Natural killer cell (primary cell): ENCODE measurements at regions of chr18 and their contacts with region 1.

Region 1: GRCh38 chr18:59885579-59886163 is 14.1 kb upstream of the PMAIP1 start:
- DNase-seq: peak in 1 of 2 donors; percentile 56
- ATAC-seq: peak; percentile 74 to 83 (median 80)
- H3K4me3 ChIP-seq: no peak overlapping the region
- H3K4me3 Mint-ChIP-seq: peak overlapping the region; percentile 86
- H3K27ac ChIP-seq: peak overlapping the region; percentile 71
- H3K27ac Mint-ChIP-seq: peak overlapping the region; percentile 85 to 89
- H3K4me1 ChIP-seq: peaks cover 38% of the 10 kb centered on the region
- H3K4me1 Mint-ChIP-seq: peaks cover 42 to 43% of the 10 kb centered on the region in 2 donors
- H3K27me3 ChIP-seq: no peaks in the 10 kb centered on the region
- H3K27me3 Mint-ChIP-seq: no peaks in the 10 kb centered on the region
- CTCF ChIP-seq: no peak

Region 2: DNA sequence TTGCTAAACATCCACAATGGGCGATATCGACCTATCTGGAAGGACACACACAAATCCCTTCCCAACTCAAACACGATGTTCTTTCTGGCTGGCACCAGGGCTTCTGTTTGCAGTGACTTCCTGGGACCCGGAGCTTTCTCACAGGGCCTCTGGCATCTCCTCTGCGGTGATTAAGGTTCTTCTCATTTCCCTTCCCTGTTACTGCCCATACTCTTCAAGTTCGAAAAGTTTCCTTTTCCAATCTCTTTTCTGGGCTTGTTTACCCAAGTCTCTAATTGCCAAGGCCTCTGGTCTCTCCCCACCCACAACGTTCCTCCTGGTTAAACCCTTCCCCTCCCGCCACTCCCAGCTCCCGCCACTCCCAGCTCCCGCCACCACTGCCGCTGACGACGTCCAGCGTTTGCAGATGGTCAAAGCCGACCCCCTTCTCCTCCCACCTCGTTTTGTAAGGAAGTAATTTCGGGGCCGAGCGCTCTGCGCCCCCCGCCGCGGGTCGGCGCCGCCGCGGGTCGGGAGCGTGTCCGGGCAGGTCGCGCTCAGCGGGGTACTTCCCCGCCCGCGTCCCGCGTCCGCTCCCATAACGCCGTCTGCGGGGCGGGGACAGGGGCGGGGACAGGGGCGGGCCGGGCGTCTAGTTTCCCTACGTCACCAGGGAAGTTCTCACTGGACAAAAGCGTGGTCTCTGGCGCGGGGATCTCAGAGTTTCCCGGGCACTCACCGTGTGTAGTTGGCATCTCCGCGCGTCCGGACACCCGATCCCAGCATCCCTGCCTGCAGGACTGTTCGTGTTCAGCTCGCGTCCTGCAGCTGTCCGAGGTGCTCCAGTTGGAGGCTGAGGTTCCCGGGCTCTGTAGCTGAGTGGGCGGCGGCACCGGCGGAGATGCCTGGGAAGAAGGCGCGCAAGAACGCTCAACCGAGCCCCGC is 13.9 kb after region 1 on chr18 and contains the start of gene PMAIP1:
- intact Hi-C with region 1: loop called (anchors 2 kb)
- DNase-seq: peak; percentile 91
- ATAC-seq: peak; percentile 71 to 91 (median 84)
- H3K4me3 ChIP-seq: peak within 1 kb of the TSS; percentile 97
- H3K4me3 Mint-ChIP-seq: peak within 1 kb of the TSS; percentile 97
- H3K27ac ChIP-seq: peak within 1 kb of the TSS; percentile 95
- H3K27ac Mint-ChIP-seq: peak within 1 kb of the TSS; percentile 90 to 98
- H3K4me1 ChIP-seq: peaks cover 14% of the 10 kb centered on the region
- H3K4me1 Mint-ChIP-seq: peaks cover 46 to 49% of the 10 kb centered on the region in 2 donors
- H3K27me3 ChIP-seq: no peaks in the 10 kb centered on the region
- H3K27me3 Mint-ChIP-seq: no peaks in the 10 kb centered on the region
- CTCF ChIP-seq: no peak
- total RNA-seq, gene PMAIP1: 211 to 514 (median 264) TPM